Activated naive CD4-positive, alpha-beta T cell treated with anti-CD3 and anti-CD28 coated beads, Interleukin-2, amount 10 ng/mL, durations not matched to agents 7 days and 5 days (primary cell): ENCODE measurements at regions of chr20 and their contacts with region 1.

Region 1: GRCh38 chr20:57398231-57398821 is 7.1 kb downstream of the RBM38 start:
- DNase-seq: peak; percentile 95
- H3K4me3 Mint-ChIP-seq: peak overlapping the region; percentile 77
- H3K27ac Mint-ChIP-seq: peak overlapping the region; percentile 97
- H3K4me1 Mint-ChIP-seq: peaks cover 95% of the 10 kb centered on the region
- H3K27me3 Mint-ChIP-seq: no peaks in the 10 kb centered on the region

Region 2: DNA sequence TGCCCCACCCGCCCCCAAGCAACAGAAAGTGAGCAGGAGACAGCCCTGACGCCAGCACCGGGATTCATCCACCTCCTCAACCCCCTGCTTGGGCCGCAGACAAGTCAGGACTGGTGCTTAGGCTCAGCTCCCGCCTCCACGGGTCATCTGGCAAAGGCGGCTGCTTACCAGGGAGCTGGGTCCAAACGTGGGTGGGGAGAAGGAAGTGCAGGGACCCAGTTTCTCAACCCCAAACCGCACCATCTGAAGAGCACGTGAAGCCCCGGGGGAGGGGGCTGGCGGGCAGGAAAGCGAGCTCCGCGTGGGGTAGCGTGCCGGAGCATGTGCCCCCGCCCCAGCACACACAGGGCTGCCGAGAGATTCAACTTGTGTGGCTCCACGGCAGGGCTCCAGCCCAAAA is 219.1 kb before region 1 on chr20:
- CTCF ChIA-PET with region 1: no interaction called
- DNase-seq: no peak
- H3K4me3 Mint-ChIP-seq: no peak overlapping the region
- H3K27ac Mint-ChIP-seq: no peak overlapping the region
- H3K4me1 Mint-ChIP-seq: no peaks in the 10 kb centered on the region
- H3K27me3 Mint-ChIP-seq: peaks cover 19% of the 10 kb centered on the region

Region 3: GRCh38 chr20:57346477-57346876 is 51.8 kb before region 1 on chr20:
- CTCF ChIA-PET with region 1: no interaction called
- DNase-seq: peak; percentile 84
- H3K4me3 Mint-ChIP-seq: no peak overlapping the region
- H3K27ac Mint-ChIP-seq: no peak overlapping the region
- H3K4me1 Mint-ChIP-seq: no peaks in the 10 kb centered on the region
- H3K27me3 Mint-ChIP-seq: peaks cover 8% of the 10 kb centered on the region

Region 4: DNA sequence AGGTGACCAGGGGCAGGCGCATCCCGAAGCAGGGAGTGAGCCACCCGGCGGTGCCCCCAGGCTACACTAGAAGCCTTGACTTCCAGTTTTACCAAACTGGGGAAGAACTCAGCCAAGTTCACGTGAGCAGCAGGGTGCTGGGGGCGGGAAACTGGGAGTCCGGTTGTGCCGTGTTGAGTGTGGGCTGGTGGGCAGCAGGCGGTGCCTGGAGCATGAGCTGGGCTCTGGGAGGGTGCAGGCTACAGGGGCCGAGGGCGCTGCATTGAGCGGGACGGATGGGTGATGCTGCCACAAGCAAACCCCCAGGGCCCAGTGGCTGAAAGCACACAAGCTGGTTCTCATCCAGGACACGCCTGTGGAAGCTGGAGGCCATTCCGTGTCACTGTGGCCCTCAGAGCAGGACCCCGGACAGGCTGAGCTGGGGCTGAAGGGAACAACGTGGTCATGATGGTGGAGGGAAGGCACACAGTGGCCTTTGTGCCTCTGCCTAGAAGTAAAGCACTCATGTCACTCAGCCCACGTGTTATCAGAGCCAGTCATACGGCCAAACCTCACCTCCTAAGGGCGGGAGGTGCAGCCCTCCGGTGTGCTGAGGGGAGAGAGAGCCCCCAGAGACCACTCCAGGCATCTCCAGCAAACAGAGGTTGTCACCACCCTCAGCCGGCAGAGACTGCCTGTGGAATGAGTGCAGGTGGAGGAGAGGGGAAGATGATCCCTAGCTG is 22.4 kb after region 1 on chr20:
- CTCF ChIA-PET with region 1: no interaction called
- DNase-seq: no peak
- H3K4me3 Mint-ChIP-seq: no peak overlapping the region
- H3K27ac Mint-ChIP-seq: no peak overlapping the region
- H3K4me1 Mint-ChIP-seq: peaks cover 34% of the 10 kb centered on the region
- H3K27me3 Mint-ChIP-seq: peaks cover 58% of the 10 kb centered on the region

Region 5: DNA sequence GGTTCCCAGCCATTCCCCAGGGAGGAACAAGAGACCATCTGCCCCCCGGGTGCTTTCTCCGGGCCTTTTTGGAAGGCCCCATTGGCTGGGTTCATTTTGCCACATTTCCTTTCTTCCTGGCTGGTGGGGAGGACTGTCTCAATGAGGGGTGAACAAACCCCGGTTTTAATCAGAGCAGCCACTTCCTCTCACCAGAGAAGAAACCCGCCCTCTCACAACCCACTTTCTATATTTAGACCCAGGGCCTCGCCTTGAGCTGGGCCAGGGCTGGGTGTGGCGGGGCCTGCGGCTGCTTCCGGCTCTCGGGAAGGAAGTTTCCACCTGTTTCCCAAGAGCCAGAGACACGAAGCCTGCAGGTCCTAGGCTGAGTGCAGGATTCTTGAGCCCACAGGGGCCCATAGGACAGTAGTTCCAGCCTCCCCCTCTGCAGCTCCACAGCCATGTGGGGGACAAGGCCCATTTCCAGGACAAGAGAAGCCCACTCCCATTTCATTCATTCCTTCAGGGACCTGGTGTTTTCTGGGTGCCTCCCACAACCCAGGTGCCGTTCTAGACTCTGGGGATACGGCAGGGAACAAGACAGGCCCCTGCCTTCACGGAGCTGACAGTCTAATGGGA is 34.7 kb after region 1 on chr20:
- CTCF ChIA-PET with region 1: interaction called, 26 read pairs
- DNase-seq: peak; percentile 88
- H3K4me3 Mint-ChIP-seq: peak overlapping the region; percentile 53
- H3K27ac Mint-ChIP-seq: peak overlapping the region; percentile 96
- H3K4me1 Mint-ChIP-seq: peaks cover 74% of the 10 kb centered on the region
- H3K27me3 Mint-ChIP-seq: peaks cover 13% of the 10 kb centered on the region

Region 6: DNA sequence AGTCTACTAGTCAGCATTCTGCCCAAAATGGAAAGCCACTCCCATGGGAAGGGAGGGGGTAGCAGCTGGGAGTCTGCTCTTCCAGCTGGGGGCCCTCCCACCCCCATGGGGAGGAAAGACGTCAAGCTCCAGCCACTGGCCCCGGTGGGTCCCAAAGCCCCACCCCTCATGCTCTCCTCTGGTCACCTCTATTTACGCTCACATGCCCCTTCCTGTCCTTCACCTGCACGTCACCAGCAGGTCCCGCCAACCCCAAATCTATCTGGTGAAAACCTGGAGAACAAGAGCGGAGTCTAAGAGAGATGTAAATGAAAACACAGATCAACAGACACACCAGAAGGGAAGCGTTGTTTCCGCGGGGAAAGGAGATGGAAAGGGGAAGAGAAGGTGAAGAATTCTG is 251.9 kb after region 1 on chr20:
- CTCF ChIA-PET with region 1: no interaction called
- DNase-seq: no peak
- H3K4me3 Mint-ChIP-seq: no peak overlapping the region
- H3K27ac Mint-ChIP-seq: no peak overlapping the region
- H3K4me1 Mint-ChIP-seq: peaks cover 5% of the 10 kb centered on the region
- H3K27me3 Mint-ChIP-seq: peaks cover 83% of the 10 kb centered on the region